Testis (tissue), 5 donors: ENCODE measurements at regions of chr1 and their contacts with region 1.

Region 1: GRCh38 chr1:3410142-3410925 is 44.1 kb upstream of the ARHGEF16 start:
- DNase-seq: peak; percentile 88
- H3K4me3 ChIP-seq: no peak overlapping the region
- H3K27ac ChIP-seq: peak overlapping the region in 1 of 2 donors; percentile 21
- H3K4me1 ChIP-seq: peaks cover 6% of the 10 kb centered on the region
- H3K27me3 ChIP-seq: no peaks in the 10 kb centered on the region
- CTCF ChIP-seq: peak; percentile 61 to 75 (median 65)
- POLR2A ChIP-seq: no peak

Region 2: GRCh38 chr1:3349161-3349967 is 61.0 kb before region 1 on chr1:
- intact Hi-C with region 1: loop called (anchors 5 kb)
- DNase-seq: peak; percentile 77
- H3K4me3 ChIP-seq: no peak overlapping the region
- H3K27ac ChIP-seq: peak overlapping the region; percentile 88 to 93
- H3K4me1 ChIP-seq: peaks cover 55% of the 10 kb centered on the region
- H3K27me3 ChIP-seq: no peaks in the 10 kb centered on the region
- CTCF ChIP-seq: peak in 2 of 3 experiments; percentile 38 to 39
- POLR2A ChIP-seq: no peak

Region 3: DNA sequence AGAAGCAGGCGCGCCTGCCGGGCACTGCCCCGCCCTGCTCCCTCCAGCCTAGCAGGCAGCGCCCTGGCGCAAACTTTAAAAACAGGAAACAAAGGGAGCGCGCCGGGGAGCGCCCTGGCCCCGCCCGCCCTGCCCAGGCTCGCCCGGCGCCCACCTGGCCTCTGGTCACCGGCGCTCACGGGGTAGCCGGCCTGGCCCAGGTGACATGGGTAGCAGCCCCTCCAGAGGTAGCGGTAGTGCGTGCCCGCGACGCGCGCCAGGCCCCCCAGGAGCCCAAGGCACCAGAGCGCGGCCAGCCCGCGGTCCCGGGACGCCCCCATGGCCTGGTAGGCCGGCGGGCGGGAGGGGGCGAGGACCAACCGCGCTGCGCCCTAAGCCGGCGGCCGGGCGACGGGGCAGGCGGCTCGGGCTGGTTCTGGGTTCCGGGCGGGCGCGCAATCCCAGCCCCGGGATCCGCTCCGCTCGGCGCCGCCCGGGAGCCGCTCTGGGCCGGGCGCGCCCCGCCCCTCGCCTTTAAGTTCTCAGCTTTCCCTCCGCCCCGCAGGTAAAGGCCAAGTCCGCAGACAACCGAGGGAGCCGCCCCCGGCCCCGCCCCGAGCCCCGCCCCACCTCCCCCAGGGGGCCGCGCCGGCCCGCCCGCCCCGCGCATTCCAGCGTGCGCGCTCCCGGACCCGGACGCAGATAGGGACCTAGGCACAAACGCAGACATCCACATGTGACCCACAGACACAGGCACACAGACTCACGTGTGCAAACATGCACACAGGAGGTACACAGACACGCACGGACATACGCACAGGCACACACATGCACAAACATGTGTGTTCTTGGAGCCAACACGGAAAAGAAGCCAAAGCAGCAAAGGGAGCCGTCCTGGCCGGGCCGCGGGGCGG is 120.8 kb after region 1 on chr1:
- intact Hi-C with region 1: no loop called
- DNase-seq: peak; percentile 88
- H3K4me3 ChIP-seq: peak overlapping the region; percentile 51 to 67
- H3K27ac ChIP-seq: peak overlapping the region in 1 of 2 donors; percentile 61
- H3K4me1 ChIP-seq: peaks cover 4% of the 10 kb centered on the region
- H3K27me3 ChIP-seq: no peaks in the 10 kb centered on the region
- CTCF ChIP-seq: no peak
- POLR2A ChIP-seq: no peak